MCF 10A (cell line): ENCODE measurements at regions of chr4 and their contacts with region 1.

Region 1: GRCh38 chr4:168923526-168924194 is 86.4 kb downstream of the CBR4 start:
- DNase-seq: peak; percentile 78
- H3K4me3 Mint-ChIP-seq: no peak overlapping the region
- H3K27ac Mint-ChIP-seq: no peak overlapping the region
- H3K4me1 Mint-ChIP-seq: peaks cover 6% of the 10 kb centered on the region
- H3K27me3 Mint-ChIP-seq: no peaks in the 10 kb centered on the region
- CTCF ChIP-seq: peak; percentile 71

Region 2: DNA sequence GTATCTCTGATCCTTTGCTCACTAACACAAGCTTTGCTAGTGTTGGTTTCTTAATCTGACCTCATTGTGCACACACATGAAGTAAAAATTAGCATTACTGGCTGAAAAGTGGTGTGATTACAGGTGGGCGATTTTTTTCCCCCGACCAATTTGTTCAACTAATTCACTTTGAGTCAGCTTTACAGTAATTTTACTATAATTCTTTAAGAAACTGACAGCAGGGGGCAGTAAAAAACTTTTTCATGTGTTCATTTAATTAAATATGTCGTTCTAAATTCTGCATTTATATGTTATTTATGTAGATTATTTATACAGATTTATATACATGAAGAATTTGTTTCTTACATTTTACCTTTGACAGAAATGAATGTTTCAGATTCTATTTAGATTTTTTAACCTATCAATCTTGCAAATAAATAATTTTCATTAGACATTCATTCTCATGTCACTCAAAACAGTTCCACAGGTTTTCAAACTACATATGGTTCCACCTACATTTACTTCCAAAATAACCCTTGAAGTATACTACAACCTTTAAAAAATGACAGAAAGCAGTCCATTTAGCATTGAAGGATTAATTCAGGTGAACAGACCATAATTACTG is 409.3 kb before region 1 on chr4:
- CTCF ChIA-PET with region 1: interaction called, 40 read pairs
- POLR2A ChIA-PET with region 1: no interaction called
- intact Hi-C with region 1: loop called (anchors 2 kb)
- DNase-seq: peak; percentile 69
- H3K4me3 Mint-ChIP-seq: no peak overlapping the region
- H3K27ac Mint-ChIP-seq: no peak overlapping the region
- H3K4me1 Mint-ChIP-seq: peaks cover 10% of the 10 kb centered on the region
- H3K27me3 Mint-ChIP-seq: no peaks in the 10 kb centered on the region
- CTCF ChIP-seq: peak; percentile 33

Region 3: DNA sequence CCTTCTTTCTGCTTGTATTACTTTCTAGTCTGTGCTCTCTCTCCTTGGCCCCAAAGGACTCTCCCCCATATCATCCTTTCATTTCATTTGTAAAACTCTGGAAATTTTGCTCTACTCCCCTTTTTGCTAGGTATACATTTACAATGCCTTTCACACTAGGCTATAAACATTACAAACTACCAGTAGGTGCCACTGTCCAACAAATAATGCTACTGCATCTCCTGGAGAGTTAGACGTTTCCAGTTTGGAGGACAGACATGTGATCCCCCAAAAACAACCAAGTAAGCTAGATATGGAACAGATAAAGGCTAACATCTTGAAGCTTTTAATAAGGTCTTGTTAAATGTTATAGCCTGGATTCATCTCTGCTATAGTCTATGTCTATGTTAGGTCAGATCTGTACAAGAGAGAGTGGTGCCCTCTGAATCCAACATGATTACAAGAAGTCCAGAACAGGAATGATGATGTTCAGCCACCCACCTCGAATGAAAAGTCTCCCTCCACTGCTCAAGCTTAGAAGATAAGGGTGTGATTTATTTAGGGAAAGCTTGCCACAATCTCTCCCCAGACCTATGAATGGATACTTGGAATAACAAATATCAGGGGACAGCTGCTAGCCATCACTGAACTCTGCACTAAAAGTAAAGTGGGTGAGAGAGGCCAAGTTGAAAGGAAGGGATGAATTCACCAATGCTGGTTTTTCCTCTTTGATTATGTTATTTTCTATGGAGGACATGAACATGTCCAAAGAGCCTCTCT is 72.1 kb after region 1 on chr4:
- CTCF ChIA-PET with region 1: interaction called, 11 read pairs
- POLR2A ChIA-PET with region 1: no interaction called
- intact Hi-C with region 1: no loop called
- DNase-seq: peak; percentile 17
- H3K4me3 Mint-ChIP-seq: no peak overlapping the region
- H3K27ac Mint-ChIP-seq: no peak overlapping the region
- H3K4me1 Mint-ChIP-seq: peaks cover 17% of the 10 kb centered on the region
- H3K27me3 Mint-ChIP-seq: no peaks in the 10 kb centered on the region
- CTCF ChIP-seq: peak; percentile 20

Region 4: DNA sequence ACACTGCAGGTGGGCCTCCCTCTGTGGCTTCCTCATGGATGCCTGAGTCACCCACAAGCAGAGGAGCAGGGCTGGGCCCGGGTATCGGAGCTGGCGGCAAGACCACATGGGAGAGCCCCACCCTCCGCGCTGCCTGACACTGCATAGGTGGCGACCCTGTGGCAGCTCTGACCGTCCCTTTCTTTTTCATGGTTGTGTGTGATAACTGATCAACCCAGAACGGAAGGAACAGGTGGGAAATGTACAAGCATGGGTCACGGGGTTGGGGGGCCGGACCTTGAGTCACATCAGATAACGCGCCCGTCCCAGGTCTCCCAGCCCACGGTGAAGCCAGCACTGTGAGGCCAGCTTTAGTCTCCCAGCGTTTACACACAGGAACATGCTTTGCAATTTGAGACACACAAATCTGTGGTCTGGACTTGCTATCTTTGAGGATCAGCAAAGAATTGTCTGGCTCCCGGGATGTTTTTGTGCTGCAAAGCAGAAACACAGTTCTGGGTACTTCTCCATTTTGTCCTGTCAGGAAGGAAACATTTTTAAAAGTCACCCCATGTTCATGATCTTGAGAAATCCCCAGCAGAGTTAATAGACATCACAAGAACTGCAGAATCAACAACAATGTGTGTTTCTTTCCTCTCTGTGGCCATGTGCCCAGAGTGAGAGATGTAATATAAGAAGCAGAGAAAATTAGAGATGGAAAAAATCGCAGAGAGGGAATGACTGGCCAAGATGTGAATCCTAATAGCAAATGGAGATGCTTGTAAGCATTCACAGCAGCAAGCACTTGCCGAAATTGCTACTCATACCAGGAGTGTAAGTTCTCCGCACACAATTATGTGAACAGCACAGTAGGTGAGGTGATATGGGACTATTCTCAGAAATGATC is 156.5 kb after region 1 on chr4:
- CTCF ChIA-PET with region 1: no interaction called
- POLR2A ChIA-PET with region 1: no interaction called
- intact Hi-C with region 1: no loop called
- DNase-seq: peak; percentile 16
- H3K4me3 Mint-ChIP-seq: no peak overlapping the region
- H3K27ac Mint-ChIP-seq: no peak overlapping the region
- H3K4me1 Mint-ChIP-seq: peaks cover 11% of the 10 kb centered on the region
- H3K27me3 Mint-ChIP-seq: no peaks in the 10 kb centered on the region
- CTCF ChIP-seq: no peak

Region 5: GRCh38 chr4:169147191-169147590 is 223.5 kb after region 1 on chr4:
- CTCF ChIA-PET with region 1: no interaction called
- POLR2A ChIA-PET with region 1: no interaction called
- intact Hi-C with region 1: no loop called
- DNase-seq: peak; percentile 25
- H3K4me3 Mint-ChIP-seq: no peak overlapping the region
- H3K27ac Mint-ChIP-seq: no peak overlapping the region
- H3K4me1 Mint-ChIP-seq: peaks cover 6% of the 10 kb centered on the region
- H3K27me3 Mint-ChIP-seq: no peaks in the 10 kb centered on the region
- CTCF ChIP-seq: no peak

Region 6: DNA sequence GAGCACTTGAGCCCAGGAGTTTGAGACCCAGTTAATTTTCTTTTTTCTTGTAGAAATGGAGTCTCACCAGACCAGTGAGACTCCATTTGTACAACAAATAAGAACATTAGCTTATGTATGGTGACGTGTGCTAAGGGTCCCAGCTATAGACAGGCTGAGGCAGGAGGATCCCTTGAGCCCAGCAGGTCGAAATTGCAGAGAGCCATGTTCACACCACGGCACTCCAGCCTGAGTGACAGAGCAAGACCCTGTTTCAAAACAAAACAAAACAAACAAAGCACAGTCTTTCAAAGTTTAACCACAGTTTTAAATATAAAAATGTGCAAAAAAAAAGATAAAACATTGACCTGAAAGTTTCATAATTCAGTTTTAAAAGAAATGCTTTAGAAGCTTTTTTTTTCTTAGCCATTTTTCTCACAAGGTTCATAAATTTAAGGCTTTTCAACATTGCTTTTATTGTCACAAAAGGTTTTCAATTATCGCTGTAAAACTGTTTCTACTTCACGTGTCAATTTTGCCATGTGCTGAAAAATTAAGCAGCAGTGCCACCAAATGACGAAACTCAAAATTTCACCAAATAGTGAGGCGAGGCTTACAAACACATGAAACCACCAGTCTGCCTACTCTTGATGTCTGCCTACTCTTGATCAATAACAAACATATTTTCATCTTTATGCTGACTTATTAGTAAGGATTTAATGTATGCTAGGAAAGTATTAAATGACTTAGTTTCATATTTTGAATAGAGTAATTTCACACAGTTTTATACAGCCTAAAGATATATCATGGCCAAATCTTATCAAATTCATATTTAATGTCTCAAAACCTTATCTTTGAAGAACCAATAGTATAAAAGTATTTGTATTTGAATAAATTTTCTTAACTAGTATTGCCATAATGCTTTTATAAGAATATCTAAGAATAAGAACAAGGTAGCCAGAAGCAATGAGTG is 562.4 kb after region 1 on chr4:
- CTCF ChIA-PET with region 1: interaction called, 58 read pairs
- POLR2A ChIA-PET with region 1: interaction called, 3 read pairs
- intact Hi-C with region 1: loop called (anchors 1 kb)
- DNase-seq: peak; percentile 66
- H3K4me3 Mint-ChIP-seq: no peak overlapping the region
- H3K27ac Mint-ChIP-seq: peak overlapping the region; percentile 15
- H3K4me1 Mint-ChIP-seq: no peaks in the 10 kb centered on the region
- H3K27me3 Mint-ChIP-seq: no peaks in the 10 kb centered on the region
- CTCF ChIP-seq: peak; percentile 51

Region 7: GRCh38 chr4:169557061-169557636 is 633.5 kb after region 1 on chr4:
- CTCF ChIA-PET with region 1: interaction called, 6 read pairs
- POLR2A ChIA-PET with region 1: no interaction called
- intact Hi-C with region 1: loop called (anchors 2 kb)
- DNase-seq: no peak
- H3K4me3 Mint-ChIP-seq: no peak overlapping the region
- H3K27ac Mint-ChIP-seq: no peak overlapping the region
- H3K4me1 Mint-ChIP-seq: no peaks in the 10 kb centered on the region
- H3K27me3 Mint-ChIP-seq: no peaks in the 10 kb centered on the region
- CTCF ChIP-seq: no peak

Region 8: GRCh38 chr4:169881769-169882168 is 958.1 kb after region 1 on chr4:
- CTCF ChIA-PET with region 1: no interaction called
- POLR2A ChIA-PET with region 1: no interaction called
- intact Hi-C with region 1: no loop called
- DNase-seq: no peak
- H3K4me3 Mint-ChIP-seq: no peak overlapping the region
- H3K27ac Mint-ChIP-seq: no peak overlapping the region
- H3K4me1 Mint-ChIP-seq: no peaks in the 10 kb centered on the region
- H3K27me3 Mint-ChIP-seq: no peaks in the 10 kb centered on the region
- CTCF ChIP-seq: no peak